ENCODE measurements at regions of chr1 and their contacts with region 1.

Region 1: DNA sequence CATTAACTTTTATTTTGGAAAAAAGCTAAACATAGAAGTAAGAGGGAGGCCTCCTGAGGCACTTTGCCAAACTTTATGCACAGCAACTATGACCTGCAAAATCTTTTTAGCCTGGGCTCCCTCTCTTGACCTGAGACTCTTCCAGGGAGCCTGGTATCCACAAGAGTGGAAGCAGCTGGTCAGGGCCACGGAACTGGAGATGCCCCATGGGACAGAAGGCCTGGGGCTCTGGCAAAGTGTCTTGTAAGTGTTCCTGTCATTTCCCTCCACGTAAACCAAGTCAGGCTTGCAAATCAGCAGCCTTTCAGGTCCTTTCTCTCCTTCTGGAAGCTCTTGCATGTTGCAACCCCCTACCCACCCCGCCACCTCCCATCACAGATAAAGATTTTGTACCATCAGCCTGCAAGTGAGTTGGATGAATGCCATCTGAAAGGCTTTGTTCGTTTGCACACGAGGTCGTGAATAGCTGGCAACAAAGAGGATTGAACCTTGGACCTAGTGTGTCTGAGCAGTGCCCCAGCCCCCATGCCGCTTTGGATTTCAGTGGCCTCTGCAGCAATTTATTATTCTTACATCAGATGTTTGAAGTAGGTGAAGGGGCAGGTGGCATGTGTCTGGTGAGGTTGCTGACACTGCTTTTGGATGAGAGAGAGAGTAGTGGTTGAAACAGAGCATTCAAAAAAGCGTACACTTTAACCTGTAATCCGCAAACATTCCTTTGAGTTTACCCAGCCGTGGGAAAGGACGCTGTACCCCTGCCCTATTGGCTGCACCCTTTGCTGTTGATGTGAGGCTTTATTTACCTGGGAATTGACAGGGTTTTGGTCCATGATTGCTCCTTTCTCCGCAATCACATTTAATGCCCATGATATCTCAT is 91.6 kb downstream of the GALNT2 start:
- DNase-seq: no peak
- ATAC-seq: peak; percentile 30 to 70 (median 58)
- H3K4me3 ChIP-seq: no peak overlapping the region
- H3K27ac ChIP-seq: peak overlapping the region; percentile 79
- H3K4me1 ChIP-seq: peaks cover 92% of the 10 kb centered on the region
- H3K27me3 ChIP-seq: no peaks in the 10 kb centered on the region
- CTCF ChIP-seq: no peak

Region 2: DNA sequence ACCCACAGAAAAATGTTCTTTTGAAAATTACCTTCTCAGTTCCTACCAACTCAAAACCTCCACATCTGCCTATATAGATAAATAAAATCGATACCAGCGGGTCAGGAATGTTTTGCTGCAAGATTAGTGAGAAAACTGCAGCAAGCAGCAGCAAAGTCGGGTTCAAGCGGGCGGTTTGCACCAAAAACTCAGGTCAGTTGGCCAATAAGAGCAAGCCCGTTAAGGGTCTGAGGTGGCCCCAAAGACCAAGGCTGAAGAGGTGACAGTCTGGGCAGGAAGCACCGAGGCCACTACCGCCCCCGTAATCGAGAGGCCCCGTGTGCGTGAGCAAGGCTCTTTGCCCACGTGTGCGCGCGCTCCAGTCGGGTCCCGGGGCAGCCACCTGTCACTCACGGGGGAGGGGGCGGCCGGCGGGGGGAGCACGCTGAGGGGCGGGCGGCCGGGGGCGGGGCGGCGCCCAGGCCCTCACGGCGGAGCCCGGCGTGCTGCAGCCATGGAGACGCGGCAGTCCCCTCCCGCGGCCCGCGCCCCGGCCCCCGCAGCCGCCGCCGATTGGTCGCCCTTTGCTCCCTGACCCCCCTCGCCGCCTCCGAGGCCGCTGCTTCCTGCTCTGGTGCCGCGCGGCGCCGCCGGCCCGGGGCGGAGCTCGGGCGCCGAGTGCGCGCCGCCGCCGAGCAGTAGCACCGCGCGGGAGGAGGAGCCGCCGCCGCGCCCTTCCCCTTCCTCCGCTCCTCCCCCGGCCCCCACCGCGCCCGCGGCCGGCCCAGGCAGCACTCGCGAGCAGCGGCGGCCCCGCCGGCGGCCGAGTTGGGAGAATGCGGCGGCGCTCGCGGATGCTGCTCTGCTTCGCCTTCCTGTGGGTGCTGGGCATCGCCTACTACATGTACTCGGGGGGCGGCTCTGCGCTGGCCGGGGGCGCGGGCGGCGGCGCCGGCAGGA is 91.9 kb before region 1 on chr1 and contains the start of gene GALNT2:
- intact Hi-C with region 1: no loop called
- DNase-seq: peak; percentile 91 to 94
- ATAC-seq: peak; percentile 81 to 89 (median 86)
- H3K4me3 ChIP-seq: peak within 1 kb of the TSS; percentile 95
- H3K27ac ChIP-seq: peak within 1 kb of the TSS; percentile 89
- H3K4me1 ChIP-seq: peaks cover 37% of the 10 kb centered on the region
- H3K27me3 ChIP-seq: no peaks in the 10 kb centered on the region
- CTCF ChIP-seq: no peak
- total RNA-seq, gene GALNT2: 49.4 to 88.7 (median 79.6) TPM

Region 3: DNA sequence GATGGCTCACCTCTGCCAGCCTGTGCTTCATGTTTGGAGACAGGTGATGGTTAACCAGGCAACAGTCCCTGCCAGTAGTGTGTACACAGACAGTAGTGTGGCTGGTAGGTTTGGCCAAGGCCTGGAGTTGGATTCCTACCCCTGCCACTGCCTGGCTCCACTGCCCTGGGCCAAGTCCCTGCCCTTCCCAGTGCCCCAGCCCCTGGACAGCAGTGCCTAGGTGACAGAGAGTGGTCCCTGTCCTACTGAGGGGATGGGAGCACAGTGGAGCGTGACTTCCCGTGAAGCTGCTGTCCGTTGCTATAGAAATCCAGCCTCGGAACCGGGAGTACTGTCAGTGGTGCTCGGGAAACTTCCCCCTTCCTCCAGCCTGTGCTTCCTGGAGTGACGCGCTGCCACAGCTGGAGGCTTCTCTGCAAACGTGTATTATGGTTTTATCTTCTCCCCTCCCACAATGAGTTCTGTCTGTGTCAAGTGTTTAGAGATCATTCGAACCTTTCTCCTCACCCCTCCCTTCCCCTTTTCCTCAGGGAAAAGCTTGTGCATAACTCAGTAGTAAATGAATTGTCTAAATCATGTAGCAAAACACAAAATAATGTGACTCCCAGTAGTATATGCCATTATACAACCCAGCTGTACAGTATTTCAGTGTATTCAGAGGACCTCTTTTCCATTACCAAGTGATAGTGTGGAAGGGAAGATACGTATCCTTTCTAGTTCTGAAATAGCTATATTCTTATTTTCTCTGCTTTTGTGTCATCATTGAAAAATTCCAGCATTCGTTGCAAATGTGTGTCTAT is 18.2 kb before region 1 on chr1:
- intact Hi-C with region 1: loop called in 1 of 2 experiments (anchors 1 kb)
- DNase-seq: peak; percentile 37 to 68
- ATAC-seq: peak; percentile 55 to 79 (median 70)
- H3K4me3 ChIP-seq: no peak overlapping the region
- H3K27ac ChIP-seq: peak overlapping the region; percentile 6
- H3K4me1 ChIP-seq: peaks cover 73% of the 10 kb centered on the region
- H3K27me3 ChIP-seq: no peaks in the 10 kb centered on the region
- CTCF ChIP-seq: no peak

Region 4: DNA sequence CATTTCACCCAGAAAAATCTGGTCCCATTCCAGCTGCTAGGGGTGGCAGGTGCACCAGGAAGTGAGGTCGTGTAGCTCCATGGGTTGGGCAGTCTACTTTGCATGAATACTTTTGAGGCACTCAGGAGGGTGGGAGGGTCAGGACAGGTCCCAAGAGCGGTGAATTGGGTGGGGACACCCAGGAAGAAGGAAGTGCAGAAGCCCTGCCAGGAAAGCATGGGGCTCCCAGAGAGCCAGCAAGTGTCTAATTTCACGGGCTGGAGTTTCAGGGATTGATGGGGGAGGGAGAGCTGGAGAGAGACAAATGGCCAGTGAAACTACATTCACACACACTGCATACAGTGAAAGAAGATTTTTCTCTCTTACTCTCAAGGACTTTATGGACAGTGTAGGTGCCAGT is 46.2 kb after region 1 on chr1:
- intact Hi-C with region 1: loop called in 1 of 2 experiments (anchors 5 kb)
- DNase-seq: no peak
- ATAC-seq: peak; percentile 63 to 67 (median 64)
- H3K4me3 ChIP-seq: no peak overlapping the region
- H3K27ac ChIP-seq: peak overlapping the region; percentile 74
- H3K4me1 ChIP-seq: peaks cover 77% of the 10 kb centered on the region
- H3K27me3 ChIP-seq: no peaks in the 10 kb centered on the region
- CTCF ChIP-seq: no peak

Region 5: GRCh38 chr1:230426246-230427093 is 267.8 kb after region 1 on chr1 and contains the start of gene PGBD5:
- intact Hi-C with region 1: no loop called
- DNase-seq: peak; percentile 75 to 85
- ATAC-seq: peak; percentile 95 to 98 (median 96)
- H3K4me3 ChIP-seq: peak within 1 kb of the TSS; percentile 72
- H3K27ac ChIP-seq: no peak within 1 kb of the TSS
- H3K4me1 ChIP-seq: peaks cover 4% of the 10 kb centered on the region
- H3K27me3 ChIP-seq: peaks cover 0 to 34% (median 3%) of the 10 kb centered on the region in 3 donors
- CTCF ChIP-seq: no peak
- total RNA-seq, gene PGBD5: 2.8 to 9.8 (median 5.8) TPM

Region 6: DNA sequence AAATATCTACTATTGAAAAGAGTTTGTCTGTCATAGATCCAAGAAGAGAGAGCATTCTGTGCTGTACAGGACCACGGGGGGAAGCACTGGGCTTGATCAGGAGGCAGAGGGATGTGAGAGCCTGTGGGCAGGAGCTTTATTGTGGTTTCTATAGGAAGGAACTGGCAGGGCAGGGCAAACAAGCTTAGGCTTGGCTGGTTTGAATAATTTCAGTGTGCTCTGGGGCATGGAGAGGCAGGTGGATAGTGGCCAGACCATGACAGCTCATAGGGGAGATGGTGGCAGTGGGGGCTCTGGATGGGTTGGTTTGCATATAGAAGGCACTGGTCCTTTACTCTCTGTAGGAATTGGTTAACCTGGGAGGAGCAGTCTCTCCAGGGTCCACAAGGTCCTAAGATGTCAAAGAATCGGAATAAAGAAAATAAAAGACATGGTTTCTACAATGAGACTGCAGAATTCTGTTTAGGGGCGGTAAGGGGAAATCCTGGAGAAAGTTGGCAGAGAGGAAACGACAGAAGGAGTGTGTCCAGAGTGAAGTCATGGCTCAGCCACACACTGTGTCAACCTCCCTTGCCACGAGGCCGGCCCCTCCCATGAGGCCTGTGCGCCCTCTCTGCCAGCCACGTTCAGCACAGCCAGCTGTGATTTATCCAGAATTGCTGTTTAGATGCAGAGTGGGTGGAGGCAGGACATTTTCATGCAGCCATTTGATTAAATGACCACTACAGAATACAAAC is 349.2 kb after region 1 on chr1:
- intact Hi-C with region 1: no loop called
- DNase-seq: peak in 1 of 2 donors; percentile 25
- ATAC-seq: peak in 1 of 4 donors; percentile 53
- H3K4me3 ChIP-seq: no peak overlapping the region
- H3K27ac ChIP-seq: no peak overlapping the region
- H3K4me1 ChIP-seq: no peaks in the 10 kb centered on the region
- H3K27me3 ChIP-seq: no peaks in the 10 kb centered on the region
- CTCF ChIP-seq: no peak

Measured in psoas muscle (tissue), 8 donors.